Naive thymus-derived CD4-positive, alpha-beta T cell (primary cell): ENCODE measurements at regions of chr5 and their contacts with region 1.

Region 1: GRCh38 chr5:134086943-134087305 is 27.6 kb upstream of the TCF7 start:
- DNase-seq: peak; percentile 45 to 96 (median 93)
- ATAC-seq: peak; percentile 87
- H3K4me3 ChIP-seq: peak overlapping the region; percentile 32
- H3K4me3 Mint-ChIP-seq: peak overlapping the region; percentile 74 to 87 (median 82)
- H3K27ac ChIP-seq: peak overlapping the region; percentile 66
- H3K27ac Mint-ChIP-seq: peak overlapping the region; percentile 81 to 99 (median 96)
- H3K4me1 ChIP-seq: peaks cover 59 to 87% of the 10 kb centered on the region in 2 donors
- H3K4me1 Mint-ChIP-seq: peaks cover 47 to 98% (median 85%) of the 10 kb centered on the region in 7 donors
- H3K27me3 ChIP-seq: no peaks in the 10 kb centered on the region
- H3K27me3 Mint-ChIP-seq: peaks cover 0 to 24% (median 0%) of the 10 kb centered on the region in 5 donors

Region 2: GRCh38 chr5:133825631-133826289 is 261.2 kb before region 1 on chr5:
- CTCF ChIA-PET with region 1: no interaction called
- POLR2A ChIA-PET with region 1: no interaction called
- intact Hi-C with region 1: no loop called
- DNase-seq: peak in 7 of 9 donors; percentile 33 to 61 (median 54)
- ATAC-seq: peak; percentile 68
- H3K4me3 ChIP-seq: no peak overlapping the region
- H3K4me3 Mint-ChIP-seq: peak overlapping the region in 8 of 10 donors; percentile 36 to 81 (median 68)
- H3K27ac ChIP-seq: no peak overlapping the region
- H3K27ac Mint-ChIP-seq: peak overlapping the region; percentile 40 to 88 (median 72)
- H3K4me1 ChIP-seq: peaks cover 18 to 25% of the 10 kb centered on the region in 2 donors
- H3K4me1 Mint-ChIP-seq: peaks cover 16 to 53% (median 33%) of the 10 kb centered on the region in 7 donors
- H3K27me3 ChIP-seq: no peaks in the 10 kb centered on the region
- H3K27me3 Mint-ChIP-seq: peaks cover 0 to 7% (median 0%) of the 10 kb centered on the region in 5 donors

Region 3: GRCh38 chr5:134125039-134126015 is 38.4 kb after region 1 on chr5:
- CTCF ChIA-PET with region 1: interaction called, 5 read pairs
- POLR2A ChIA-PET with region 1: no interaction called
- intact Hi-C with region 1: loop called in 1 of 2 experiments (anchors 2 kb)
- DNase-seq: no peak
- ATAC-seq: no peak
- H3K4me3 ChIP-seq: peak overlapping the region; percentile 86
- H3K4me3 Mint-ChIP-seq: peak overlapping the region; percentile 93 to 100 (median 98)
- H3K27ac ChIP-seq: peak overlapping the region; percentile 97
- H3K27ac Mint-ChIP-seq: peak overlapping the region; percentile 80 to 99 (median 98)
- H3K4me1 ChIP-seq: peaks cover 61 to 100% of the 10 kb centered on the region in 2 donors
- H3K4me1 Mint-ChIP-seq: peaks cover 31 to 91% (median 69%) of the 10 kb centered on the region in 7 donors
- H3K27me3 ChIP-seq: no peaks in the 10 kb centered on the region
- H3K27me3 Mint-ChIP-seq: peaks cover 0 to 3% (median 0%) of the 10 kb centered on the region in 5 donors

Region 4: DNA sequence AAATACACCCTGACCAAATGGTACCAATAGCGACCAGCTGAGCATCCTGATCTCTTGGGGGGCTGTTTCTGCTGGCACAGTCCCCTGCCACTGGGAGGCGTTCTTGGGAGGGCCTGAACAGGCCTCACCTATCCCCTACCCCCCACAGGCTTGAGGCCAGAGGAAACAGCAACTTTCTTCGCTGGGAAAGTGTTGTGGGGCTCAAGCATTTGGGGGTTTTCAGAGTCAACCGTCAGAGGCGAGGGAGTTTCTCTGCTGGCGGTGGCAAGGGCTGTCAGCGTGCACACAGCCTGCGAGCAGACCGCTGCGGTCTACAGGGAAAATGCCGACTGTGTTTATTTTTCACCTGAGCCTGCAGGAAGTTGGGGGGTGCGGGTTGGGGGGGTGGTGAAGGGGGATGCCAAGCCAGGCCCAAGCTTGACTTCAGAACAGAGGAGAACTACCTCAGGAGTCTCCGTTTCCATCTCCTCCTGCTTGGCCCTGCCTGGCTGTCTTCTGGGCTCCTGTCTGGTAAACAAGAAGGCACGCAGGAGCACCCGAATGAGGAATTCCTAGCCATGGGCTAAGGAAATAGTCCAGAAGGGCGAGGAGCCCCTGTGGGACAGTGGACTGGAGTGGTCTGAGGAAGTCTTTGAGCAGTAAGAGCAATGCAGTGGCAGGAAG is 45.6 kb after region 1 on chr5:
- CTCF ChIA-PET with region 1: interaction called, 5 read pairs
- POLR2A ChIA-PET with region 1: no interaction called
- intact Hi-C with region 1: loop called in 1 of 2 experiments (anchors 1 kb)
- DNase-seq: peak; percentile 52 to 94 (median 87)
- ATAC-seq: peak; percentile 87
- H3K4me3 ChIP-seq: peak overlapping the region; percentile 86
- H3K4me3 Mint-ChIP-seq: peak overlapping the region; percentile 93 to 100 (median 98)
- H3K27ac ChIP-seq: peak overlapping the region; percentile 97
- H3K27ac Mint-ChIP-seq: peak overlapping the region; percentile 90 to 99 (median 98)
- H3K4me1 ChIP-seq: peaks cover 92 to 97% of the 10 kb centered on the region in 2 donors
- H3K4me1 Mint-ChIP-seq: peaks cover 57 to 100% (median 90%) of the 10 kb centered on the region in 7 donors
- H3K27me3 ChIP-seq: no peaks in the 10 kb centered on the region
- H3K27me3 Mint-ChIP-seq: peaks cover 0 to 2% (median 0%) of the 10 kb centered on the region in 5 donors